Ovary (tissue), 10 donors: ENCODE measurements at regions of chr5 and their contacts with region 1.

Region 1: GRCh38 chr5:75053304-75054133 is 1.2 kb upstream of the GCNT4 start:
- DNase-seq: peak; percentile 37 to 75 (median 51)
- H3K4me3 ChIP-seq: peak overlapping the region; percentile 65
- H3K27ac ChIP-seq: peak overlapping the region; percentile 78 to 92
- H3K4me1 ChIP-seq: peaks cover 8% of the 10 kb centered on the region
- H3K27me3 ChIP-seq: no peaks in the 10 kb centered on the region
- CTCF ChIP-seq: peak in 1 of 3 donors; percentile 19
- EP300 ChIP-seq: no peak
- POLR2A ChIP-seq: no peak

Region 2: DNA sequence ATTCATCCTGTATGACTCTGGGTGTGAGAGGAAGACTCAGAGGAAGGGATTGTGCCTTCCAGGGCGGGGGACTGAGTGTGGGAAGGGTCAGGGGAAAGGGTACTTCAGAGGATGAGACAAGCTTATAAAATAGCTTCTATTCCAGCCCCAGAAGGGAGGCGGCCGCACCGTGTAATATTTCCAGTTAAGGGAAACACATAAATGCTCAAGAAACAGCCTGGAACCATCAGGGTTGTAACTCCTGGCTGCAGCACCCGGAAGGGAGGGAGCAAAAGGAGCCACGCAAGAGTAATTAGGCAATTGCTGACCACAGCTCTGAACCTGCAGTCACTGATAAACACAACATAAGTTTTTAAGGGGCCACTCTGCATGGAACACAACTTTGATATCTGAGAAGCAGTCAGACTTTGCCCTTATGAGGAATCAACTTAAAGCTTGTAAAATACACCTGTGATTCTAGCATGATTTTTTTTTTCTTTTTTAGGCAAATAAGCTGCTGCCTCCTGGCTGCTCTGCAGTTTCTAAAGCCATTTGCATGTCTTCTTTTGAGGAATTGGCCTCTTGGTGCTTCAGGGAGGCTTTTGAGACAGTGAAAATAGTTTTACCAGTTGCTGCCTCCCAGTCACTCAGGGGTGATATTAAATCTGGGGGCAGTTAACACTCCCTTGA is 795.7 kb before region 1 on chr5:
- intact Hi-C with region 1: loop called in 1 of 4 experiments (anchors 10 kb)
- DNase-seq: peak; percentile 72 to 87 (median 76)
- H3K4me3 ChIP-seq: no peak overlapping the region
- H3K27ac ChIP-seq: peak overlapping the region; percentile 47 to 51
- H3K4me1 ChIP-seq: peaks cover 7% of the 10 kb centered on the region
- H3K27me3 ChIP-seq: no peaks in the 10 kb centered on the region
- CTCF ChIP-seq: no peak
- EP300 ChIP-seq: no peak
- POLR2A ChIP-seq: no peak

Region 3: DNA sequence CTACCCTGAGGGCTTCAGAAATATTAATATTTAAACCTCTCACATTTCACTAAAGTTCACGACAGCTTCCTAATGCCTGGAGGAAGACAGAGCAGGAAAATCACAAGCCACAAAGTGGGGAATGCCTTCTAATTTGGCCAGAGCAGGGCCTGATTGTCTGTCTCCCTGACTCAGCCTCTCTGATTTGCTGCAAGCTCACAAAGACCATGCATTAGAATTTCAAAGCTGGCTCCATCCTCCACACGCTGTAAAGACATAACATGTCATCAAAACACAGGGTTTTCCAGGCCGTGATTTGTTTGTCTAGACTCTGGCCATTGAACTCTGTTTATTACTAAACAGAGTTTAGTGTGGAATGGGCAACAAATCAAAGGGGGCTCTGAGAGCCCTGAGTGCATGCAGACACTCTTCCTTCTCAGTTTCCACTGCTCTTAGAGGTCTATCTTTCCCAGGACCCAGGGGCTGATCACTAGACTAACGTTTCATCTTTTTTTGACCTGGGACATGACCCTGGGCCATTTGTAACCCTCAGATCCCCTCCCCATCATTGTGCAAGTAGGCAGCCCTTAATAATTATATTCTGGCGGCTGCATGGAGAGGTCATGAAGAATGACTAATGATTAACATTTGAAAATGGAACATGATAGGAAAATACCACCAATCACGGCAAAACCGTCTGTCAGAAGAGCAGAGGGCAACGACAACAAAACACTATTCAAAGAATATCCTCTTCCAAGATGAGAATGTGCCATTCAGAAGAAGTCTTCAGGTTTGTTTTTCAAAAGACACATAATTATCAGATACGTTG is 553.2 kb before region 1 on chr5:
- intact Hi-C with region 1: no loop called
- DNase-seq: no peak
- H3K4me3 ChIP-seq: no peak overlapping the region
- H3K27ac ChIP-seq: no peak overlapping the region
- H3K4me1 ChIP-seq: no peaks in the 10 kb centered on the region
- H3K27me3 ChIP-seq: no peaks in the 10 kb centered on the region
- CTCF ChIP-seq: no peak
- EP300 ChIP-seq: no peak
- POLR2A ChIP-seq: no peak

Region 4: GRCh38 chr5:76145945-76146344 is 1092.4 kb after region 1 on chr5:
- intact Hi-C with region 1: no loop called
- DNase-seq: no peak
- H3K4me3 ChIP-seq: no peak overlapping the region
- H3K27ac ChIP-seq: no peak overlapping the region
- H3K4me1 ChIP-seq: peaks cover 1% of the 10 kb centered on the region
- H3K27me3 ChIP-seq: no peaks in the 10 kb centered on the region
- CTCF ChIP-seq: no peak
- EP300 ChIP-seq: no peak
- POLR2A ChIP-seq: no peak